Activated naive CD4-positive, alpha-beta T cell treated with anti-CD3 and anti-CD28 coated beads, Interleukin-2, amount 10 ng/mL, durations not matched to agents 7 days and 5 days (primary cell): ENCODE measurements at regions of chr7 and their contacts with region 1.

Region 1: GRCh38 chr7:104267701-104268368 is 60.0 kb upstream of the ORC5 start:
- DNase-seq: no peak
- H3K4me3 Mint-ChIP-seq: no peak overlapping the region
- H3K27ac Mint-ChIP-seq: peak overlapping the region; percentile 43
- H3K4me1 Mint-ChIP-seq: no peaks in the 10 kb centered on the region
- H3K27me3 Mint-ChIP-seq: peaks cover 4% of the 10 kb centered on the region

Region 2: DNA sequence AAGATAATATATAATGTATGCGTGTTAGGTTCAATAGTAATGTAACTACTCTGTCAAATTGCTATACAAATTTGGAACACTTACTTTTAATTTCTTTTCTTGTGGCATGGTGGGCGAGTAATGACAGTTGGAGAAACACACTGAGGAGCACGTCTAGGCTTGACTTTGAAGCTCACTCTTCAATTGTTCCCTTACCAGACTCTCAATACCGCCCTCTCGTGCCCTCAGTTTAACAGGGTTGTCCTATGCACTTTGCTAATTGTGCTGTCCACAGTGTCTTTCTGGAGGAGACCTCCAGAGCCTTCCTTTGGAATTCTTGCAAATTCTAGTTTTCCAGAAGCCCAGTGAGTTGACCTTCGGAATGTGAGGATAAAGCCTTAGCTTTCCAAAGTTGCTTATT is 171.2 kb before region 1 on chr7:
- CTCF ChIA-PET with region 1: no interaction called
- DNase-seq: no peak
- H3K4me3 Mint-ChIP-seq: no peak overlapping the region
- H3K27ac Mint-ChIP-seq: no peak overlapping the region
- H3K4me1 Mint-ChIP-seq: no peaks in the 10 kb centered on the region
- H3K27me3 Mint-ChIP-seq: peaks cover 13% of the 10 kb centered on the region

Region 3: DNA sequence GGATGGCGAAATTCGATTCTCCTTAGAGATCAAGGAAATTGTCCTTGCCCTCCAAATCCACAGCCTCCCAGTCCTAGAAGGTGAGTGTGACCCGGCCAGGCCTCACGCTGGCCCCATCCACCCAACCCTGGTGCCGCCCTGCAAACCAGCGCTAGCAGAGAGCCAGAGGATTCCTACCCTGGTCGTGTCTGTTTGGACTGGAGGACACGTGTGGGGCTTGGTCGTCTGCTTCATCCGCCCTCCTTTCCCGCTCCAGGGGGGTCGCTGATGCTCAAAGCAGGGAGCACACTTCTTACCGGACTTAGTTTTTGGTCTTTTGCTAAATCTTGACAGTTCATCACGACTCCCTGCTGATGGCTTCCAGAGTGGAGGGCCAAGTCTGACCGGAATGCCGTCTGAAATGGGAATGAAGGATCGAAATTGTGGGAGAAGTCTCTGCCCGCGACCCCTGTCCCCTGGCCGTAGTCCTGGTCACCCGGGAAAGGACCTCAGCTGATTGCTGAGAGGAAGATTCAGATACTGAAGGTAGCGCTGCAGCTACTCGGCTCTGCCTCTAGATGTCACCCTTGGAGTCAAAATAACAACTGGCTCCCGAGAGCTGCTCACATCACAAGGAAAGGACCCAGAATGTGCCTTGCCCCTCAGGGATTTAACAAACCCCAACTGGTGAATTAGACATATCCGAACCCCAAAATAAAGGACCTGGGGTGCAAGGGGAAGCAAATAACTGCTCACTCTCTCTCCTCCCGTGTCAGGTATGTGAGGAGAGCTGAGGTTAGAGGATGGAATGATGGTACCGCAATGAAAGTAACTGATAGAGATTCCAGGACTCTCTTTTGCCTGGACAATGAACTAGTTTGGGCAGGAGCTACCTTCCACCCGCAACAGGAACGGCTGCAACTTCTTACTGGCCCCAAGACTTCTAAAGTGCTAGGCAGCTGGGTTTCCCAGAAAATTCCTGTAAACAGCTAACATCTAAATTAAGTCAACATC is 36.5 kb before region 1 on chr7:
- CTCF ChIA-PET with region 1: interaction called, 30 read pairs
- DNase-seq: peak; percentile 48
- H3K4me3 Mint-ChIP-seq: no peak overlapping the region
- H3K27ac Mint-ChIP-seq: no peak overlapping the region
- H3K4me1 Mint-ChIP-seq: no peaks in the 10 kb centered on the region
- H3K27me3 Mint-ChIP-seq: peaks cover 20% of the 10 kb centered on the region